ENCODE measurements at regions of chr19 and their contacts with region 1.

Region 1: DNA sequence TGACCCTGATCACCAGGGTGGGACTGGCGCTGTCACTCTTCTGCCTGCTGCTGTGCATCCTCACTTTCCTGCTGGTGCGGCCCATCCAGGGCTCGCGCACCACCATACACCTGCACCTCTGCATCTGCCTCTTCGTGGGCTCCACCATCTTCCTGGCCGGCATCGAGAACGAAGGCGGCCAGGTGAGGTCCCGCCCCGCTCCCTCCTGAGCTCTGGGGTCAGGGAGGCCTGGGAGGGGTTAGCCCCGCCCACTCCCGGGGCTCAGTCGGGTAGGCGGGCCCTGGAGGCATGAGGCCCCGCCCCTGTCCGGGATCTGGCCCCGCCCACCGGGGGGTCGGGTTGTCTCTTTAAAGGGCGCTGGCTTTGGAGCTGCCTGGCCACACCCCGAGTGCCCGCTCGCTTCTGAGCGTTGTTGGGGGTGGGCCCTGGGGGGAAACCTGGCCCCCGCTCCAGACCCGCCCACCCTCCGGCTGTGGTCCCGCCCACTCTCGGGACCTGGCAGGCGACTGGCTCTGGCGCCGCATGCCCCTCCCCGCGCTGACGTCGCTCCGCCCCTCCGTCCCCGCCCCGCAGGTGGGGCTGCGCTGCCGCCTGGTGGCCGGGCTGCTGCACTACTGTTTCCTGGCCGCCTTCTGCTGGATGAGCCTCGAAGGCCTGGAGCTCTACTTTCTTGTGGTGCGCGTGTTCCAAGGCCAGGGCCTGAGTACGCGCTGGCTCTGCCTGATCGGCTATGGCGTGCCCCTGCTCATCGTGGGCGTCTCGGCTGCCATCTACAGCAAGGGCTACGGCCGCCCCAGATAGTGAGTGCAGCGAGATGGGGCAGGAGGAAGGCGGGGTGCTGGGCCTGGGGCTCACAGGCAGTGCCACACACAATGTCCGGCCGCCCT is 13.1 kb downstream of the DDX39A start:
- DNase-seq: peak; percentile 94
- H3K4me3 ChIP-seq: peak overlapping the region; percentile 4
- H3K27ac ChIP-seq: no peak overlapping the region
- H3K4me1 ChIP-seq: peaks cover 4% of the 10 kb centered on the region
- CTCF ChIP-seq: peak; percentile 59; the same call in 1 of the 2 replicates

Region 2: GRCh38 chr19:14377883-14378328 is 28.1 kb before region 1 on chr19:
- CTCF ChIA-PET with region 1: interaction called, 3 read pairs
- POLR2A ChIA-PET with region 1: interaction called, 4 read pairs
- intact Hi-C with region 1: loop called (anchors 2 kb)
- DNase-seq: peak; percentile 64
- H3K4me3 ChIP-seq: peak overlapping the region; percentile 58
- H3K27ac ChIP-seq: peak overlapping the region; percentile 68
- H3K4me1 ChIP-seq: peaks cover 69% of the 10 kb centered on the region
- CTCF ChIP-seq: no peak

Measured in OCI-LY7 (cell line).